Posterior cingulate gyrus (tissue), 11 donors: ENCODE measurements at regions of chr12 and their contacts with region 1.

Region 1: DNA sequence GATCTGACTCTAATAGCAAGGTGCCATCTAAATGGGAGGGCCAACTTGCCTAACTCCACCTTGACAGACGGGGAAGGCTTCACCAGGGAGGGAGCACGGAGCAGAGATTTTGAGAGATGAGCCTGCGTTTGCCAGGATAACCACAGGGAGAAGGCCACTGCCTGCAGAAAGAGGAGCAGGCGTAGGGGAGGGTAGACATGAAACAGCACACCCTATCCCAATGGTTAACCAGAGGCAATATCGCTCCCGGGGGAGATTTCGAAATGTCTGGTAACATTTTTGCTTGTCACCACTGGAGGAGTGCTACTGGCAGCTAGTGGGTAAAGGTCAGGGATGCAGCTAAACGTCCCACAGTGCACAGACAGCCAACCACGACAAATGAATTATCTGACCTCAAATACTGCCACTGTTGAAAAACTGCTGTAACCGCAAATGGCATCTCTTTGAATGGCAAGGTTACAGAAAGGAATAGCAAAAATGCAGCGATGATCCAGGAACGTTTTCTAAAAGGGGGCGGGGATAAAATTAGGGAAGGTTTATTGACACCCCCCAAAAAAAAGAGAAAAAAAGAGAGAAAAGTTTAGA is 126.0 kb upstream of the ATF7IP start:
- DNase-seq: no peak

Region 2: DNA sequence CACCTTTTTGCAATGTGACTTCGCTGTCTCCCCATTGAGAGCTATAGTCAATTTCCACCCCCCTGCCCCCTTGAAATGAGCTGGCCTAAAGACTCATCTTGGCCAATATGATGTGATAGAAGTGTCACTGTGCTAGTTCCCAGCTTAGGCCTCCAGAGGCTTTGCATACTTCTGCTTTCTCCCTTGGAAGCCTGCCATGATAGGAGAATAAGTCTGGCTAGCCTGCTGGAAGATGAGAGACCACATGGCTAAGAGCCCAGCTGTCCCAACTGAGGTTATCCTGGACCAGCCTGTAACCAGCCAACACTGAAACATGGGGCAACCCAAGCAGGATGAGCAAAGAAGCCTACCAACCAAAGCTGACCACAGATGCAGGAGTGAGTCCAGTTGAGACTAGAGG is 454.9 kb before region 1 on chr12:
- intact Hi-C with region 1: no loop called
- DNase-seq: no peak

Region 3: DNA sequence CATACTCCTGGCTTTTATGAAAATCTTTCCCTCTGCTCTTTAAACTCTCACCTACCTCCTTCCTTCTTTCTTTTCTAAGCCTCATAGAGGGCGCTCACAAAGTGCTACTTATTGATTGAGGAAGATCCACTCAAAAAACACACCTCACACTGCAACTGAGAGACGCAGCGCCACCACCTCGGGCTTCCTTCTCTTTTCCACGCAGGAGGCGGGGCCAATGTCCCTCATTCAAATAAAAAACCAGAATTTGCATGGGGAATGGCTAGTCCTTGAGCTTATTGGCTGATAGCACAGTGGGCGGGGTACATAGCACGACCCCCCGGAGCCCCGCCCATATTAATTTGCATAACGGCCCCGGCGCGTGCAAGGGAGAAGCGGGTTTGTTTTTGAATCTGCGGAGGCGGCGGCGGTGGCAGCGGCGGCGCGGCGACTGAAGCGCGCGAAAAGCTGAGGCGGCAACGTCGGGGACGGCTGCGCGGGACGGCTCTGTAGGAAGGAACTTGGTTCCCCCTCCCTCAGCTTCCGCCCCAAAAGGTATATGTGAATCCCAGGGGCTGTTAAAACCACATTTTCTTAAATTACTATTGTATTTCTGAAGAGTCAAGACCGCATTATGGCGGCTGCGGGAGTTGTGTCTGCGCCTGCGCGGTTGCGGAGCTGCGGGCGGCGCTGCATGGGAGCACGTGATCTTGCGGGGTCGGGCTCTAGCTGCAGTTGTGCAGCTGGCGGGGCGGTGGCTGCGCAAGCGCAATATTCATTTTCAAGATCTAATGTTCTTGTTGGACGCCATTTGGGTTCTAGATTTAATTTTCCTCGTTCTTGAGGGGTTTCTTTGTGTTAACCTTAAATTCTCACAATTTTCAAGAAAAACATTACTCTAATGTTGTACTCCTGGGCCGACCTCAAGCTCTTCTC is 126.1 kb after region 1 on chr12 and contains the start of gene ATF7IP:
- intact Hi-C with region 1: loop called (anchors 5 kb)
- DNase-seq: peak; percentile 83 to 98 (median 91)

Region 4: GRCh38 chr12:14417715-14418114 is 178.3 kb after region 1 on chr12:
- intact Hi-C with region 1: loop called (anchors 5 kb)
- DNase-seq: peak; percentile 49 to 95 (median 70)

Region 5: DNA sequence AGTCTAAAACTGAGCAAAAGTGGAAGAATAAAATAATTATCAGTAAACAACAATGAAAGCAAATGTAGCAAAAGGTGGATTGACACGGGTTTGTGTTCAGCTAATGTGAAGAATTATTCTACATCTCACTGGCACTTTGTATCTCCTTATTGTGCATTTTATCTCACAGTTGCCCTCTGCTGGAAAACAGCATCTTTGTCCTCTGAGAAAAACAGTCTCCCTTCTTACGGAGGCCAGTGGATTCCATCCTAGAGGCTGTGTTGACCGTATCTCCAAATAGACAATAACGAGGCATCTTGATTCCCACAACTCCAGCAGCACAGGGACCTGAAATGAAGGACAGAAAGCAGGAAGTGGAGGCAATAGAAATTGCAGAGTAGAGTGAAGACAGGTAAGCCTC is 379.5 kb after region 1 on chr12:
- intact Hi-C with region 1: loop called (anchors 2 kb)
- DNase-seq: no peak

Region 6: GRCh38 chr12:14664510-14664909 is 425.1 kb after region 1 on chr12:
- intact Hi-C with region 1: loop called (anchors 2 kb)
- DNase-seq: no peak